Esophagus muscularis mucosa (tissue), 4 donors: ENCODE measurements at regions of chr11 and their contacts with region 1.

Region 1: GRCh38 chr11:63738720-63739360 is 29.7 kb downstream of the ZFTA start:
- DNase-seq: peak; percentile 95
- H3K4me3 ChIP-seq: no peak overlapping the region
- H3K27ac ChIP-seq: peak overlapping the region in 2 of 4 donors; percentile 0 to 27
- H3K4me1 ChIP-seq: peaks cover 0 to 14% (median 10%) of the 10 kb centered on the region in 4 donors
- H3K27me3 ChIP-seq: no peaks in the 10 kb centered on the region
- CTCF ChIP-seq: peak; percentile 96 to 99 (median 97)
- EP300 ChIP-seq: no peak
- POLR2A ChIP-seq: no peak

Region 2: DNA sequence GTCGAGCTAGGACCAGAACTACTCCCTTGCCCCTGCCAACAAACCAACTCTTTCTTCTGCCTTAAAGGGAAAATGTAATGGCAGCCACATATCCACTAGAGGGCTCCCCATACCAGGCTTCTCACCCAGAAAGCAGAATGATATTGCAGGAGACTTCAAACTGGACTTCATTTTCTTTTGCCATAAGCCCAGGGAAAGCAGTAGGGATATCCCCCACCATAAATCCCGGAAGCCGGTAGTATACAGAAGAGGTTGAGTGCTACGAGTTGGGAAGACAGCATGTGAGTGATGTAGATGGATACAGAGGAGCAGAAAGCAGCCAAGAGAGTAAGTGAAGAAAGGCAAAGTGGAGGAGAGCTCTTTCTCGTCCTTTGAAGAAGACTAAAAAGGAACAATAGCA is 259.9 kb before region 1 on chr11:
- intact Hi-C with region 1: loop called (anchors 5 kb)
- DNase-seq: no peak
- H3K4me3 ChIP-seq: no peak overlapping the region
- H3K27ac ChIP-seq: peak overlapping the region in 2 of 4 donors; percentile 40 to 47
- H3K4me1 ChIP-seq: peaks cover 0 to 8% (median 4%) of the 10 kb centered on the region in 4 donors
- H3K27me3 ChIP-seq: no peaks in the 10 kb centered on the region
- CTCF ChIP-seq: peak; percentile 92 to 95 (median 95)
- EP300 ChIP-seq: no peak
- POLR2A ChIP-seq: no peak

Region 3: DNA sequence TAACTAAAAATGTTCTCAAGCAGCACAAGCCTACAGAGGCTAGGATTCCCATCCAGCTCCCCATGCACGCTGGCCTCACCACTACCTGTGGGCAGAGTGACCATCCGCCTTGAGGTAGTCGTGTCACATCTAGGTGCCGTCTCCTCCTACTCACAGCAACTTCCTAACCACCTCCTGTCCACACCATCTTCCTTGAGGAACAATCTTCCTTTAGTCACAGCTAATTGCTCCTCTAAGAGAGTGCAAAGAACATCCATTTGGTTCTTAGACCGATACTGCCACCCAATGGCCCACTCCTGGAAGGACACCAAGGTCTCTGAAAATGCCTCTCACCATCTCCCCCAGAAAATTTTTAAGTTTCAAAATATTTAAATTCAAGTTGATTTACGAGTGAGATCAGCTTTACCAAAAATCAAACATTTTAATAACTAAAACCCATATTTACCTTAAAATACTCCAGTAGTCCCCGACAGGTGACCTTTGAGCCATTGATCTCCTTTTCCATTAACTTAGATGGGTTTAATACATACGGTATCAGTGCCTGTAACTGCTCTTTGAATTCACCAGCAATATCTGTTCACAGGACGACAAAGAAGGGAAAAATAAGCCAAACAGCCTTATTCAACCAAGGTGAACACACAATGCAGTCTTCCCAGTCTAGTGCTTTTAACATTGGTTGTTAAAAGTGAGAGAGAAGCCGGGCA is 102.9 kb before region 1 on chr11:
- intact Hi-C with region 1: loop called (anchors 5 kb)
- DNase-seq: no peak
- H3K4me3 ChIP-seq: no peak overlapping the region
- H3K27ac ChIP-seq: peak overlapping the region in 1 of 4 donors; percentile 38
- H3K4me1 ChIP-seq: peaks cover 0 to 19% (median 12%) of the 10 kb centered on the region in 4 donors
- H3K27me3 ChIP-seq: no peaks in the 10 kb centered on the region
- CTCF ChIP-seq: peak; percentile 74 to 83 (median 77)
- EP300 ChIP-seq: no peak
- POLR2A ChIP-seq: no peak

Region 4: DNA sequence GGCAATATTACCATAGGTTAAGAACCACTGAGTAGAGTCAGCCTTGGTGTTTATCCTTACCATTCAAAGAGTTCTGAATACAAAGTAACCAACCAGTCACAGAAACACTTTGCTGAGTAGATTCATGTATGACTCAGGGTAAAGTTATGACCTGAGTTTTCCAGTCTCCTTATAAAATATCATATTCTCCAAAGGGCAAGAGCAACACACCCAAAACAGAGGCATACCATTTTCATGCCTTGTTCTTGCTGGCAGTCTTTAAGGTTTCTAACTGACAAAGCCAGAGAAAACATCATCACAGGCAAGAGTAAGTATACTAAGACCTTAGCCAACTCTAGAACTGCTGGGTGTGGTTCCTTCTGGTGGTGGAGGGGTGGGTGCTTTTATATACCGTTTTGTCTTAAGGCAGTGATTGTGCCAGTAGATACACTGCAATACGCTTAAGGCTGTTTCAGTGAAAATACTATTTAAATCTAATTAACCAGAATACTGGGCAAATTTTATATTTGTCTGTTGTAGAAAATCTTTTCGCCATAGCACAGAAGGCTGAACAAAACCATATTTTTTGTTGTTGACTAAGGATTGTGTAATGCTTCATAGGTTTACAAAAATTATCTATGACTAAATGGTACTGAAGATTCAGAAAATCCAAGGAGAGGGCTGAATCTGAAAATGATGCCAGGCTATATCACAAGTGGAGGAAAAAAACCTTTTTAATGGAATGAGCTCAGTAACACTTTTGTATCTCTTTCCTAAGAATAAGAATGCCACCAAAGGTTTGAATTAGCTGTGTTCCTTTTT is 70.6 kb before region 1 on chr11:
- intact Hi-C with region 1: loop called (anchors 5 kb)
- DNase-seq: no peak
- H3K4me3 ChIP-seq: peak overlapping the region in 2 of 4 donors; percentile 3 to 4
- H3K27ac ChIP-seq: peak overlapping the region; percentile 97 to 100 (median 99)
- H3K4me1 ChIP-seq: peaks cover 46 to 78% (median 75%) of the 10 kb centered on the region in 4 donors
- H3K27me3 ChIP-seq: no peaks in the 10 kb centered on the region
- CTCF ChIP-seq: no peak
- EP300 ChIP-seq: no peak
- POLR2A ChIP-seq: no peak